Activated naive CD4-positive, alpha-beta T cell treated with anti-CD3 and anti-CD28 coated beads for 36 hours (primary cell): ENCODE measurements at regions of chr1 and their contacts with region 1.

Region 1: GRCh38 chr1:207097871-207098324 is 6.1 kb upstream of the C4BPA start:
- DNase-seq: peak; percentile 65
- H3K4me3 Mint-ChIP-seq: no peak overlapping the region
- H3K27ac Mint-ChIP-seq: peak overlapping the region; percentile 86
- H3K4me1 Mint-ChIP-seq: peaks cover 9% of the 10 kb centered on the region
- H3K27me3 Mint-ChIP-seq: peaks cover 4% of the 10 kb centered on the region

Region 2: GRCh38 chr1:207052911-207053769 is 44.8 kb before region 1 on chr1 and contains the start of gene PFKFB2:
- CTCF ChIA-PET with region 1: interaction called, 4 read pairs
- intact Hi-C with region 1: loop called (anchors 1 kb)
- DNase-seq: peak; percentile 97
- H3K4me3 Mint-ChIP-seq: peak within 1 kb of the TSS; percentile 97
- H3K27ac Mint-ChIP-seq: peak within 1 kb of the TSS; percentile 68
- H3K4me1 Mint-ChIP-seq: peaks cover 36% of the 10 kb centered on the region
- H3K27me3 Mint-ChIP-seq: no peaks in the 10 kb centered on the region
- total RNA-seq, gene PFKFB2: 3.4 to 6.2 TPM

Region 3: GRCh38 chr1:207084701-207085180 is 13.2 kb before region 1 on chr1:
- CTCF ChIA-PET with region 1: interaction called, 7 read pairs
- intact Hi-C with region 1: loop called (anchors 1 kb)
- DNase-seq: peak; percentile 73
- H3K4me3 Mint-ChIP-seq: no peak overlapping the region
- H3K27ac Mint-ChIP-seq: no peak overlapping the region
- H3K4me1 Mint-ChIP-seq: peaks cover 23% of the 10 kb centered on the region
- H3K27me3 Mint-ChIP-seq: no peaks in the 10 kb centered on the region

Region 4: DNA sequence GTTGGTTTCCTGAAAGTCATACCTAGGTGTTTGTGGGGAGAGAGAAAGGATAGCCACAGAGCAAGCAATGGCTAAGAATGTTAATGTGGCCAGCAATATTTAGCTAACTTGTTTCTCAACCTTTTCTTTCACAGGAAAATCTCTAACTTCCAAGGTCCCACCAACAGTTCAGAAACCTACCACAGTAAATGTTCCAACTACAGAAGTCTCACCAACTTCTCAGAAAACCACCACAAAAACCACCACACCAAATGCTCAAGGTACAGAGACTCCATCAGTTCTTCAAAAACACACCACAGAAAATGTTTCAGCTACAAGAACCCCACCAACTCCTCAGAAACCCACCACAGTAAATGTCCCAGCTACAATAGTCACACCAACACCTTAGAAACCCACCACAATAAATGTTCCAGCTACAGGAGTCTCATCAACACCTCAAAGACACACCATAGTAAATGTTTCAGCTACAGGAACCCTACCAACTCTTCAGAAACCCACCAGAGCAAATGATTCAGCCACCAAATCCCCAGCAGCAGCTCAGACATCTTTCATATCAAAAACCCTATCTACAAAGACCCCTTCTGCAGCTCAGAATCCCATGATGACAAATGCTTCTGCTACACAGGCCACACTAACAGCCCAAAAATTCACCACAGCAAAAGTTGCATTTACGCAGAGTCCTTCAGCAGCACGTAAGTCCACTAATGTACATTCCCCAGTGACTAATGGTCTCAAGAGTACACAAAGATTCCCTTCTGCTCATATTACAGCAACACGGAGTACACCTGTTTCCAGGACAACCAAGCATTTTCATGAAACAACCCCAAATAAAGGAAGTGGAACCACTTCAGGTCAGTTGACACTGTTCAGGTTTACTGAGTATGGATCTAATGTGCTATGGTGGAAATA is 238.9 kb after region 1 on chr1:
- CTCF ChIA-PET with region 1: interaction called, 3 read pairs
- intact Hi-C with region 1: loop called (anchors 5 kb)
- DNase-seq: peak; percentile 43
- H3K4me3 Mint-ChIP-seq: no peak overlapping the region
- H3K27ac Mint-ChIP-seq: peak overlapping the region; percentile 82
- H3K4me1 Mint-ChIP-seq: peaks cover 68% of the 10 kb centered on the region
- H3K27me3 Mint-ChIP-seq: no peaks in the 10 kb centered on the region

Region 5: DNA sequence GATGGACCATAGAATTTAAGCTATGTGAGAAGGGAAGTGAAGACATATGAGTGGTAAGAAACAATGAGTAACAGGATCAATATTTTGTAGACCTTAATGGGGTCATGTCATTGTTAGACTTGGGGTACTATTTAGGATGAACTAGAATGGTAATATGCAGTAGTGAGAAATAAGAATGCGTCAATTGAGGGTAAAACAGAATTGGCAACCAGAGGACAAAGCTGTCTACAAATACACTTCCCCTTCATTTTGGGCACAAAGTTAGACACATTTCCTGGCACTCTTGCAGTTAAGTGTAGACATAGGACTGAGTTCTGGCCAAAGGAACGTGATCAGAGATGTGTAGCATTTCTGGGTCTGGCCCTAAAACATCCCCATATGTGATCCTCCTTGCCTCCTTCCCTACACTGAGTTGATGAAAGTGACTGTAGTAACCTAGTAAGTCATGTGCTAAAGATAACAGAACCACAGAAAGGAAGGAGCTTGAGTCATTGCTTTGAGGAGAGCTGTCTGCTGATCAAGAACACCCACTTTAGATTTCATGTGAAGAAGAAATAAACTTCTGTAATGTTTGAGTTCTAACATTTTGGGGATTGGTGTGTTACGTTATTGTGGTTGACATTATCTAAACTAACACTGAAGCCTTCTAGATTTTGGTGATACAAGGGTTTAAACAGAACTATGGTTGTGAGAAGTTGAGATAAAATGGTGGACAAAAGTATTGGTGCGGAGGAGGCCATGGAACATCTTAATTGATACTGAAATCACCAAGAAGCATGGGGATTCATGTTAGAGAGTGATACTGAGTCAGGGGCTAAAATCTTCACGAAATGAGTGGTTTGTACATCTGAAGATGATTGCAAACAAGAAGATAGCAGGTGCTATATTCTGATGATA is 265.3 kb after region 1 on chr1:
- CTCF ChIA-PET with region 1: no interaction called
- intact Hi-C with region 1: loop called (anchors 1 kb)
- DNase-seq: peak; percentile 39
- H3K4me3 Mint-ChIP-seq: no peak overlapping the region
- H3K27ac Mint-ChIP-seq: no peak overlapping the region
- H3K4me1 Mint-ChIP-seq: peaks cover 5% of the 10 kb centered on the region
- H3K27me3 Mint-ChIP-seq: no peaks in the 10 kb centered on the region

Region 6: GRCh38 chr1:207393610-207394009 is 295.7 kb after region 1 on chr1:
- CTCF ChIA-PET with region 1: no interaction called
- intact Hi-C with region 1: loop called (anchors 1 kb)
- DNase-seq: no peak
- H3K4me3 Mint-ChIP-seq: no peak overlapping the region
- H3K27ac Mint-ChIP-seq: no peak overlapping the region
- H3K4me1 Mint-ChIP-seq: peaks cover 20% of the 10 kb centered on the region
- H3K27me3 Mint-ChIP-seq: peaks cover 2% of the 10 kb centered on the region

Region 7: DNA sequence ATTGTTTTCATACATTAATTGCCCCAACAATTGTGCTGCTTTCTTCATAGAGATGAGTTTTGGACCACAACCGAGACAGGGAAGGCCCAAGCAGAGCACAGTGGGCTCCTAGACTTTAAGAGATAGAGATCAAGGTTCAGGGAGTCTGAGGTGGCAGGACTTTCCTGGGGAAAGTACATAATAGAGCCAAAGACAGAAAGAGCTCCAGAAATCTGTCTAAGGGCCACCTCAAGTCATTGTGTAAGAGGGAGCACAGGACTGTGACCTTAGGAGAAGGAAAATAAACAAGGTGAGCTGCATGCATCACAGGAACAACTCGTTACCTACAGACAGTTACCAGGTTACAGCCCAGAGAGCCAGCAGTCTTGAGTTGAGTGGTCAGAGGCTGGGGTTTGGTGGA is 314.9 kb after region 1 on chr1:
- CTCF ChIA-PET with region 1: interaction called, 3 read pairs
- intact Hi-C with region 1: loop called (anchors 1 kb)
- DNase-seq: no peak
- H3K4me3 Mint-ChIP-seq: no peak overlapping the region
- H3K27ac Mint-ChIP-seq: peak overlapping the region; percentile 52
- H3K4me1 Mint-ChIP-seq: peaks cover 44% of the 10 kb centered on the region
- H3K27me3 Mint-ChIP-seq: peaks cover 2% of the 10 kb centered on the region